Activated B cell treated with CpG ODN at 0.5 μM for 24 hours (primary cell): ENCODE measurements at regions of chr12 and their contacts with region 1.

Region 1: GRCh38 chr12:6461401-6462233 is 8.9 kb downstream of the VAMP1 start:
- DNase-seq: peak; percentile 70
- ATAC-seq: peak; percentile 91
- H3K4me3 Mint-ChIP-seq: peak overlapping the region; percentile 70
- H3K27ac Mint-ChIP-seq: peak overlapping the region; percentile 99
- H3K4me1 Mint-ChIP-seq: peaks cover 89% of the 10 kb centered on the region
- H3K27me3 Mint-ChIP-seq: no peaks in the 10 kb centered on the region
- CTCF ChIP-seq: no peak

Region 2: GRCh38 chr12:6443361-6443983 is 18.1 kb before region 1 on chr12:
- CTCF ChIA-PET with region 1: interaction called, 22 read pairs
- POLR2A ChIA-PET with region 1: interaction called, 144 read pairs
- intact Hi-C with region 1: loop called (anchors 1 kb)
- DNase-seq: no peak
- ATAC-seq: peak; percentile 49
- H3K4me3 Mint-ChIP-seq: peak overlapping the region; percentile 84
- H3K27ac Mint-ChIP-seq: peak overlapping the region; percentile 92
- H3K4me1 Mint-ChIP-seq: peaks cover 69% of the 10 kb centered on the region
- H3K27me3 Mint-ChIP-seq: no peaks in the 10 kb centered on the region
- CTCF ChIP-seq: no peak

Region 3: GRCh38 chr12:6451348-6452244 is 10.0 kb before region 1 on chr12 and contains the start of gene TAPBPL:
- CTCF ChIA-PET with region 1: interaction called, 24 read pairs
- POLR2A ChIA-PET with region 1: interaction called, 173 read pairs
- intact Hi-C with region 1: loop called (anchors 1 kb)
- DNase-seq: peak; percentile 62
- ATAC-seq: peak; percentile 86
- H3K4me3 Mint-ChIP-seq: peak within 1 kb of the TSS; percentile 97
- H3K27ac Mint-ChIP-seq: peak within 1 kb of the TSS; percentile 99
- H3K4me1 Mint-ChIP-seq: peaks cover 58% of the 10 kb centered on the region
- H3K27me3 Mint-ChIP-seq: no peaks in the 10 kb centered on the region
- CTCF ChIP-seq: no peak
- total RNA-seq, gene TAPBPL: 52.5 and 64.0 TPM in 2 replicates

Region 4: DNA sequence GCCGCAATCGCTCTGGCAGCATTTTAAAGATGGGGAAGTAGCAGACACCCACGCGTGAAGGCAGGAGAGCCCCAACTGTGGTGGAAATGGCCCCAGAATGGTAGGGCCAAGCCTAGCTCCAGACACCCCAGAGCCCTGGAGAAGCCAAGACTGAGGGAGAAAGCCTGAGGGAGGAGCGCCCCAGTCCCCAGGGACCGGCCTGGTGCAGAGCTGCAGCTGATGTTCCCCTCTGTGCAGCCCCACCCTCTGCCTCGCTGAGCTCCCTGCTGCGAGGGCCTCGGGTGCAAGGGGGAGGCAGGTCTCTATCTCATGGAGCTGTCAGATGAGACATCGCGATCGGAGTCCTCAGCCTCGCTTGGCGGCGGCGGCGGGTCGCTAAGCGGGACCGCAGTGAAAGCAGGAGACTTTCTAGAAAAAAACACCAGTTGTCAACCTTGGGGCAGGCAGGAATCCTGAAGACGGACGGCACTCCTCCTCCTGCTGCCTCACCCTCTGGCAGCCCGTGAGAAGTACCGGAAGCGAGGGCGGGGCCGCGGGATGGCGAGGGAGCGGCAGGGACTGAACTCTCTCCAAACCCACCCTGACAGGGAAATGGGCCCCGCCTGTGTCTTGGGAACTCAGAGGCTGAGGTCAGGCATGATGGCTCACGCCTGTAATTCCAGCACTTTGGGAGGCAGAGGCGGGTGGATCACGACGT is 78.7 kb after region 1 on chr12:
- CTCF ChIA-PET with region 1: interaction called, 43 read pairs
- POLR2A ChIA-PET with region 1: interaction called, 32 read pairs
- intact Hi-C with region 1: loop called (anchors 1 kb)
- DNase-seq: no peak
- ATAC-seq: peak; percentile 45
- H3K4me3 Mint-ChIP-seq: peak overlapping the region; percentile 77
- H3K27ac Mint-ChIP-seq: peak overlapping the region; percentile 74
- H3K4me1 Mint-ChIP-seq: peaks cover 46% of the 10 kb centered on the region
- H3K27me3 Mint-ChIP-seq: no peaks in the 10 kb centered on the region
- CTCF ChIP-seq: no peak